ENCODE measurements at regions of chr2 and their contacts with region 1.

Region 1: GRCh38 chr2:191296083-191297006 is 51.1 kb downstream of the MYO1B start:
- DNase-seq: no peak
- H3K4me3 ChIP-seq: no peak overlapping the region
- H3K27ac ChIP-seq: no peak overlapping the region
- H3K4me1 ChIP-seq: no peaks in the 10 kb centered on the region
- H3K27me3 ChIP-seq: no peaks in the 10 kb centered on the region
- CTCF ChIP-seq: no peak

Region 2: DNA sequence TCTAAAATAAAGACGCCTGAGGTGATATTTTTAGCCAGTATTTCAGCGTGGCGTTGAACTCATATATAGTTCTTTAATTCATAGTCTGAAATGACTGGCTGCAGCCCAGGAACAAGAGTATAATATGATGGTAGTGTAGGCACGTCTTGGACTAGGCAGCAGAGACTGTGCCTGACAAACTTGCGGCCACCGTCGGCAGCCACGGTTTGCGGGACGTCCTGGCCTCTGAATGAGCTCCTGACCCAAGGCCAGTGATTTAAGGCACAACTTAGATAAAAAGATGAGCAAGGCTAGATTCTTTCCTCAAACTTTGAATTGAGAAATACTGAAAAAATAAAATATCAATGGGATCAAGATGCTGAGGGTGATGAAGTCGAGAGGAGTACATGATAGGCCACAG is 11.1 kb before region 1 on chr2:
- CTCF ChIA-PET with region 1: no interaction called
- POLR2A ChIA-PET with region 1: no interaction called
- intact Hi-C with region 1: no loop called
- DNase-seq: no peak
- H3K4me3 ChIP-seq: no peak overlapping the region
- H3K27ac ChIP-seq: no peak overlapping the region
- H3K4me1 ChIP-seq: no peaks in the 10 kb centered on the region
- H3K27me3 ChIP-seq: no peaks in the 10 kb centered on the region
- CTCF ChIP-seq: no peak

Region 3: GRCh38 chr2:191401287-191401686 is 104.9 kb after region 1 on chr2:
- CTCF ChIA-PET with region 1: interaction called, 12 read pairs
- POLR2A ChIA-PET with region 1: no interaction called
- intact Hi-C with region 1: no loop called
- DNase-seq: no peak
- H3K4me3 ChIP-seq: no peak overlapping the region
- H3K27ac ChIP-seq: no peak overlapping the region
- H3K4me1 ChIP-seq: peaks cover 11% of the 10 kb centered on the region; the same call in 1 of the 2 replicates
- H3K27me3 ChIP-seq: no peaks in the 10 kb centered on the region
- CTCF ChIP-seq: no peak